ENCODE measurements at regions of chr16 and their contacts with region 1.

Region 1: DNA sequence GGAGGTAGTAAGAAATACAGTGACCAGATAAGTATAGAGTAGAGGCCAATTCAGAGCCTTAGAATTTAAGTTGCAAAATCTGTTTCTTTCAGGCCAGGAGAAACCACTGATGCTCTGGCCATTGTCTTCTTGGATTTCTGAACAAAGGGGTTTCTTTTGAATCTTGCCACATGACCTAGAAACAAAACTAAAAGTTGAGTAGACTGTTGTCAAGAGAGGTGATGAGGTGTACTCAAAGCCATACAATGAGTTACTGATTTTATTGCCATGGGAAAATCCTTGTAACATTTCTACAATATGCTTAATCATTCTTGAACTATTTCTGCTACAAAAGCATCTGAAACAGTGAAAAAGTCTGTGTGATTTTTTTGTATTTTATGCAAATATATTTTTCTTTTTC is 881.3 kb downstream of the CDH11 start:
- DNase-seq: no peak
- H3K4me3 ChIP-seq: no peak overlapping the region
- H3K27ac ChIP-seq: no peak overlapping the region
- H3K4me1 ChIP-seq: peaks cover 12% of the 10 kb centered on the region
- H3K27me3 ChIP-seq: no peaks in the 10 kb centered on the region
- CTCF ChIP-seq: no peak

Region 2: DNA sequence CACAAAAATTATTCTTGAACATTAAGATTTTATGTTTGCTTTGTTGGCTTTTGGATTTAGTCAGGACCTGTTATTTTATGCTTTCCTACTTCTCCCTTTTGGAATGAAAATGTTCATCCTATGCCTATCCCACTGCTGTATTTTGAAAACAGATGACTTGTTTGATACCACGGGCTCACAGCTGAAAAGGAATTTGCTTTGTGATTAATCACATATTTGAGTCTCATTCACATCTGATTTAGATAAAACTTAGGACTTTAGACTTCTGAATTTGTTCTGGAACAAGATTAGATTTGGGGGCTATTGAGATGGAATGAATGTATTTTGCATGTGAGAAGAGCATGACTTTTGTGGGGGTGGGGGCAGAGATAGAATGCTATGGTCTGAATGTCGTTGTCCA is 131.3 kb before region 1 on chr16:
- intact Hi-C with region 1: no loop called
- DNase-seq: no peak
- H3K4me3 ChIP-seq: no peak overlapping the region
- H3K27ac ChIP-seq: no peak overlapping the region
- H3K4me1 ChIP-seq: no peaks in the 10 kb centered on the region
- H3K27me3 ChIP-seq: no peaks in the 10 kb centered on the region
- CTCF ChIP-seq: no peak

Region 3: GRCh38 chr16:64184156-64184555 is 56.4 kb before region 1 on chr16:
- intact Hi-C with region 1: loop called (anchors 10 kb)
- DNase-seq: no peak
- H3K4me3 ChIP-seq: no peak overlapping the region
- H3K27ac ChIP-seq: no peak overlapping the region
- H3K4me1 ChIP-seq: peaks cover 6% of the 10 kb centered on the region
- H3K27me3 ChIP-seq: no peaks in the 10 kb centered on the region
- CTCF ChIP-seq: no peak

Measured in left ventricle myocardium inferior (tissue), 1 donor.